Cardiac septum (tissue), 1 donor: ENCODE measurements at regions of chr10 and their contacts with region 1.

Region 1: GRCh38 chr10:18214691-18215563 is 74.7 kb downstream of the CACNB2 start:
- DNase-seq: no peak

Region 2: DNA sequence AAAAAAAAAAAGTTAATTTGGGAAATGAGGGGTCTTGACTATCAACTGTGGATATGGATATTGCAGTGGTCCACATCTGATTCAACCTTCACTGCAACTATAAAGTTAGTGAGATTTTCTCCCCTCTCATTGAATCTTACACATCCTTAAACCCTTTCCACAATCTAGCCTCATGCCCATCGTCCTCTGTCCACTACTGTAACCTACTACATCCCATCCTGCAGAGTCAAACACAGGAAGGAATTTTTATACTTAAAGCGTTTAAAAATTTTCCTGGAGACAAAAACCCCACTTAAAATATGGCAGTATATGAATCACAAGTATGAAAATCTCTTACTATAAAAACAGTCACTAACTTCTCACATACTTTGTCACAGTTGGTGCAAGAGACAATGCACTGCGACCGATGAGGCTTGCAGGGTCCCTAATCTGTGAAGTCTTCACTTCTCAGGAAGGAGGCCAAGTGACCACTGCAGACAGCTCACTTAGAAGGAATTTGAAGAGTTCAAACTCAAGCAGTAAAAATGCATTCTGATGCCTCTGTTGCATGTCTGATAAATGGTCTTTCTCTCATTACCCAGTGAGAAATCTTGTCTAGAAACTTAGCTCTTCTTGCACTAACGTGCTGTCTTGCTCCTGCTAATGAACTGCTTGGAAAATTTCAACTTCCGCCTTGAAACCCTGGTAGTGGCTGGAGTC is 710.2 kb before region 1 on chr10:
- intact Hi-C with region 1: no loop called
- DNase-seq: no peak

Region 3: DNA sequence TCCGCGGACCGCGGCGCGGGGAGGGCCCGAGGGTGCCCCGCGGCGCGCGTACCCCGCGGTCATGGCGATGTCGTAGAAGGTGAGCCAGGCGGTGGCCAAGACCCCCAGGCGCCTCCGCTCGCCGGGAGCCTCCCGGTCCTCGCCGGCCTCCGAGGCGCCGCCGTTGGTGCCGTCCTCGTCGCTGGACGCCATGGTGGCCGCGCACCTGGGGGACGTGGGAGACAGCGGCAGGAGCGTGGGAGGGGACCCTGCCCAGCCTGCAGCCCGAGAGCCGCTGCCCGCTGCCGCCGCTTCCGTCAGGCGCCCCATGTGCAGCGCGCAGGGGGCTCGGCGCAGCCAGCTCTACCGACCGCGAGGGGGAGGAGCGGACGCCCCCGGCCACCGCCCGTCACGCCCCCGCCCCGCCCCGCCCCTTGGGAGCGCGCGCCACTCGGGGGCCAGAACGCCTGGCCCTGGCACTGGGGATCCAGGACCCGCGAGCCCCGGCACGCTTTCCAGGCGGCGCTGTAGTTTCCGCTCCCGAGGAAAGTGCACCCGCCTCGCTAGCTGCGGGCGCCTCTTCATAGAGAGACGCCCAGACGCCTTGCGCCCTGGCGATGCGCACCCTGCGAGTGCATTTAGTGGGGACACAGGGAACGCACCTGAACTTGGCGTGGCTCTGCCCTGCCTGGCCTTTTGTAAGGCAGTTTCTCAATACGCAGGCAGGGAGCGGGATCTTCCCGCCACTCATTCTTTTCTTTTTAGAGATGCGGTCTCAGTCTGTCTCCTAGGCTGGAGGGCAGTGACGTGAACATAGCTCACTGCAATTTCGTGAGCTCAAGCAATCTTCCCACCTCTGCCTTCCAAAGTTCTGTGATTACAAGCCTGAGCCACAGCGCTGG is 597.7 kb before region 1 on chr10 and contains the start of gene HACD1:
- intact Hi-C with region 1: loop called (anchors 10 kb)
- DNase-seq: peak; percentile 85
- total RNA-seq, gene HACD1: 213 TPM

Region 4: GRCh38 chr10:17737027-17737965 is 477.6 kb before region 1 on chr10:
- intact Hi-C with region 1: loop called (anchors 10 kb)
- DNase-seq: no peak

Region 5: DNA sequence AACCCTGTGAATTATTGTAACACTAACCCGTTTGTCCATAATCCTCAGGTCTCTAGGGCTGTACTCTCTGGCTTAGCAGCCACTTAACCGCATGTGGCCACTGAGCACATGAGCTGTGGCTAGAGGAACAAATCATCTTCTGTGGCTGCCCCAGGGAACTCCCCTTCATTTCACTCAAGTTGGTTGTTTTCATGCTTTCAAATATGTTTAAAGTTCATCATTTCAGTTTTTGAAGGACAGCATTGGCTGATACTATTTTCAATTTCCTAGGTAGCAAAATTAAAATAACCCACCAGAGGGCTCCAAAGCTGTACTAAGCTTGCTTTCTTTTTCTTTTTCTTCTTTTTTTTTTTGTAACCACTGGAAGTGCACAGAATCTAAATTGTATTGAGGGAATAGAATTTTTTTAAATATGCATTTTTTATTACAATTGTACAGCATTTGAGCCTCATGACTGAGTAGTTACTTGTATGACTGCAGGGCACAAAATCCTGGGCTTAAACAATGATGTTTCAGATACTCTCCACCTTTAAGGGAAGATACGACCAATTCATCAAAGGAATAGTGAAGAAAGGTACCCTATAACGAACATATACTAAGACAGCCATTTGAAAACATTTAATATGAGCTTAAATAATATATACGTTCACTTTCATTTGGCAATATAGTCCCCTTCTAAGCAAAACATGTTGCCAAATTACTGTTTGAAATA is 367.2 kb before region 1 on chr10:
- intact Hi-C with region 1: loop called (anchors 5 kb)
- DNase-seq: no peak

Region 6: GRCh38 chr10:17910125-17910789 is 304.7 kb before region 1 on chr10:
- intact Hi-C with region 1: loop called (anchors 2 kb)
- DNase-seq: no peak

Region 7: DNA sequence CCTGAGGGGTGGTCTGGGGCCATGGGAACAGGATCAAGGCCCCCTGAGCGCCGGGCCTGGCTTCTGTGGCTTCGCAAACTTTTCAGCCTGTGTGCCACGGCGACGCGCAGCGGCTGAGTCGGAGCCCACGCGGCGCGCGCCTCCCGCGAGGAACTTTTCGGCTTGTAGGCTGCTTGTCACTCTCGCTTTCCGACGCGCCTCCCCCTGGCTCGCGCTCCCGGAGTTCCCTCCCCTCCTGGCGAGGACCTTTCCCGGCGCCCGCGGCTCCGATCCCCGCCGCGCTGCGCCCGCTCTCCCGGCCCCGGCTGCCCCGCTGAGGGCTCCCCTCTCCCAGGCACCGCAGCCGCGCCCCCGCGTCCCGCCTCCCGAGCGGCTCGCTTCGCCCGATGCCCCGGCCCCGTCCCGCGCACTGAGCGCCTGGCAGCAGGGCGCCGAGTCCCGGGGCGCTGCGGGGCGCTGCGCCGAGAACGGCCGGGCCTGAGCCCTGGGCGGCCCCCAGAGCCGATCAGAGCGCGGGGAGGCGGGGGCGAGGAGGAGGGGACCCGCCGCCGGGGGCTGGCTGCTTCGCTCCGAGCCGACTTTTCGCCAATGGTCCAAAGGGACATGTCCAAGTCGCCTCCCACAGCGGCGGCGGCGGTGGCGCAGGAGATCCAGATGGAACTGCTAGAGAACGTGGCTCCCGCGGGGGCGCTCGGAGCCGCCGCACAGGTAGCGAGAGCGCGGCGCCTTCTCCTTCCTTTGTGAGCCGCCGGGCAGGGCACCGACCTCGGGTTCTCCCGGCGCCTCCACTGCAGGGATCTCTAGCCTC is 74.6 kb before region 1 on chr10 and contains the start of gene CACNB2:
- intact Hi-C with region 1: loop called (anchors 1 kb)
- DNase-seq: peak; percentile 81
- total RNA-seq, gene CACNB2: 20.6 TPM

Region 8: DNA sequence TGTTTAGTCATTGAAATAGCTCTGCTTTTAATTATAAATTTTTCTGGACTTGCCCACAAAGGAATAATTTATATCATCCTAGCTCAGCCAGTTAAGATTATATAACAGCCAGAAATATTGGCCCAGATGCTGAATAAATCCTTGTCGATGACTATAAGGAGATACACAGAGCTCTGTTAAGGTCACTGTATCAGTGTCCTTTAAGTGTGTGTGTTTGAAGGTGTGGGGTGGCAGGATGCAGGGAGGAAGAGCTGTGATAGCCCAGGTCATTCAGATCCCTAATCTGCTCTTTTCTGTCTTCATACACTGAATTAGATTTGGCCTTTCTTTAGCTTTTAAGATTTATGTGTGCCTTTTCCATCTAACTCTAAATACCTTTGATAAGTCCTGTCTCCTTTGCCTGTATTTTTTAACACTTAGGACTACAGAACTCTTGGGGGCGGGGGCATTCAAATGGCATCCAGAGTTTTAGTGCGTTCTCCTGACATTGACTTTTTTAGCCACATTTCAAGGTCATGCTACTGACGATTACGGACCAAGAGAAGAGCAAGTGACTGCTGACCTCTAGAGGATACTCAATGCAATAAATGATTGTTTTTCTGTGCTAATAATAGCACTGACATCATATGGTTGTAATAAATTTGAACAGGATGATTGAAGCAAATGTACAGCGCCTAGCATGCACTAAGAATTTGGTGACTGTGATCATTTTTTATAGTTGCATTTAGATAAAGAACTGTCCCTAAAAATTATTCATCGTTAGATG is 97.6 kb after region 1 on chr10:
- intact Hi-C with region 1: loop called (anchors 5 kb)
- DNase-seq: no peak

Region 9: GRCh38 chr10:18400201-18400905 is 185.4 kb after region 1 on chr10:
- intact Hi-C with region 1: no loop called
- DNase-seq: no peak